ENCODE measurements at regions of chr6 and their contacts with region 1.

Region 1: GRCh38 chr6:149925974-149926777 is 3.3 kb upstream of the RAET1G start:
- DNase-seq: peak; percentile 93 to 96
- H3K4me3 ChIP-seq: peak overlapping the region; percentile 54 to 64
- H3K27ac ChIP-seq: peak overlapping the region; percentile 58 to 63
- H3K4me1 ChIP-seq: peaks cover 0 to 27% (median 19%) of the 10 kb centered on the region in 4 donors
- H3K27me3 ChIP-seq: peaks cover 0 to 27% of the 10 kb centered on the region in 2 donors
- CTCF ChIP-seq: peak; percentile 94 to 99

Region 2: GRCh38 chr6:149717588-149718458 is 208.4 kb before region 1 on chr6 and contains the start of gene LATS1:
- intact Hi-C with region 1: loop called (anchors 10 kb)
- DNase-seq: peak; percentile 88 to 93
- H3K4me3 ChIP-seq: peak within 1 kb of the TSS; percentile 87
- H3K27ac ChIP-seq: peak within 1 kb of the TSS; percentile 97 to 99
- H3K4me1 ChIP-seq: peaks cover 0 to 29% (median 16%) of the 10 kb centered on the region in 4 donors
- H3K27me3 ChIP-seq: no peaks in the 10 kb centered on the region
- CTCF ChIP-seq: no peak